ENCODE measurements at regions of chr16 and their contacts with region 1.

Region 1: GRCh38 chr16:20806168-20807050 is at the starts of genes ERI2 and REXO5:
- DNase-seq: peak; percentile 72 to 93
- H3K4me3 ChIP-seq: peak within 1 kb of the TSS; percentile 71 to 91 (median 80)
- H3K27ac ChIP-seq: peak within 1 kb of the TSS; percentile 72
- H3K4me1 ChIP-seq: 0 out of 7 replicates have a peak, but pooled peaks cover 0 to 3% (median 0%) of the 10 kb centered on the region in 4 experiments
- H3K27me3 ChIP-seq: no peaks in the 10 kb centered on the region
- CTCF ChIP-seq: peak in 2 of 3 experiments; percentile 6 to 12; a peak in 3 of 4 replicates
- EP300 ChIP-seq: no peak
- POLR2A ChIP-seq: peak; percentile 75 to 79; a peak in 2 of 3 replicates
- RAD21 ChIP-seq: no peak
- total RNA-seq, gene ERI2: 12.6 and 14.5 TPM in 2 replicates
- total RNA-seq, gene REXO5: 6.0 and 8.9 TPM in 2 replicates

Region 2: GRCh38 chr16:20791923-20792612 is 14.3 kb before region 1 on chr16:
- CTCF ChIA-PET with region 1: interaction called, 6 read pairs
- POLR2A ChIA-PET with region 1: interaction called, 10 read pairs
- DNase-seq: no peak
- H3K4me3 ChIP-seq: no peak overlapping the region
- H3K27ac ChIP-seq: no peak overlapping the region
- H3K4me1 ChIP-seq: peaks cover 0 to 5% (median 1%) of the 10 kb centered on the region in 4 experiments; a peak in 2 of 7 replicates
- H3K27me3 ChIP-seq: no peaks in the 10 kb centered on the region
- CTCF ChIP-seq: no peak
- EP300 ChIP-seq: no peak
- POLR2A ChIP-seq: no peak
- RAD21 ChIP-seq: no peak

Region 3: DNA sequence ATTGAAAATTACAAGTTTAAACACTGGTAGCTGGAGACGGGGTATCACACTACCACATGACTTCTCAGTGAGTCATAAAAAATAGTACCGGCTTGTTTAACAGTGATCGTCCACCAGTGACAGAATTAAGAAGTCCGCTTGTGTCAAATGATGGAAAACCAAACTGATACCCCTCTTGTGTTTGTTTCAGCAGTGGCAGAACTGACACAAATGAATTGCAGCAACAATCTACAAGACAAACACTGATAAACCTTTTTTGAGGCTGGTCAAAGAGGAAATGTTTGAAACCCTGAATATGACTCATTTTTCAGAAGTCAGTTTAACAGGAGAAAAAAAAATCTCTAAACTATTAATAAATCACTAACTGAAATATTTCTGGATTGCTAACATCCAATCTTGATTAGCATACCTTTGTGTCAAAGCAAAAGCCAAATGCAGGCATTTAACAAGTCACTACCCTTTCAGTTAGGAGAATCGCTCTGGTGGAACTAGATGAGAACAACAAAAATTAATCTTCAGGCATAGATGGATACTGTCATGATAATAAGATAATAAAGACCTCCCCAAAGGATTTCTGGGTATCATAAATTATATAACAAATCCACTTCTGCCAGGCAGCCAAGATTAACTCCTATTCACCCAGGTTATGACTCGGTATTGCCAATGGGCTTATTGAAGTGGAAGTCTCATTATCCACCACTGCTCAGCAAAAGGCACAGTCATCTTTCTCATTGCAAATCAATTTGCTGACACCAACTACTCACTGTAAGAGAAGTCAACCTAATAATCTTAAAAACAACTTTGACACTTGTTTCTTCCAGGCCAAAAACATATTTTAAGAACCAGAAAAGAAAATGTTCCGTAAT is 73.0 kb after region 1 on chr16:
- CTCF ChIA-PET with region 1: no interaction called
- POLR2A ChIA-PET with region 1: no interaction called
- DNase-seq: no peak
- H3K4me3 ChIP-seq: no peak overlapping the region
- H3K27ac ChIP-seq: no peak overlapping the region
- H3K4me1 ChIP-seq: peaks cover 0 to 9% (median 2%) of the 10 kb centered on the region in 4 experiments; a peak in 2 of 7 replicates
- H3K27me3 ChIP-seq: no peaks in the 10 kb centered on the region
- CTCF ChIP-seq: no peak
- EP300 ChIP-seq: no peak
- POLR2A ChIP-seq: no peak
- RAD21 ChIP-seq: no peak

Measured in H1 (cell line).